CD4-positive, alpha-beta T cell (primary cell): ENCODE measurements at regions of chr1 and their contacts with region 1.

Region 1: GRCh38 chr1:147599362-147600118 is 58.2 kb downstream of the BCL9 start:
- DNase-seq: peak; percentile 95 to 99 (median 97)
- ATAC-seq: peak; percentile 84
- H3K4me3 ChIP-seq: peak overlapping the region; percentile 91
- H3K4me3 Mint-ChIP-seq: peak overlapping the region; percentile 93
- H3K27ac ChIP-seq: peak overlapping the region in 1 of 2 donors; percentile 37
- H3K27ac Mint-ChIP-seq: peak overlapping the region; percentile 86
- H3K4me1 ChIP-seq: peaks cover 17% of the 10 kb centered on the region
- H3K4me1 Mint-ChIP-seq: peaks cover 33% of the 10 kb centered on the region
- H3K27me3 ChIP-seq: no peaks in the 10 kb centered on the region
- H3K27me3 Mint-ChIP-seq: no peaks in the 10 kb centered on the region
- CTCF ChIP-seq: no peak

Region 2: GRCh38 chr1:147647796-147648633 is 48.5 kb after region 1 on chr1:
- CTCF ChIA-PET with region 1: no interaction called
- POLR2A ChIA-PET with region 1: interaction called, 4 read pairs
- intact Hi-C with region 1: loop called in 1 of 2 experiments (anchors 5 kb)
- DNase-seq: peak in 6 of 14 experiments; percentile 11 to 82 (median 52)
- ATAC-seq: peak; percentile 84
- H3K4me3 ChIP-seq: peak overlapping the region; percentile 43
- H3K4me3 Mint-ChIP-seq: peak overlapping the region; percentile 50
- H3K27ac ChIP-seq: peak overlapping the region in 1 of 2 donors; percentile 71
- H3K27ac Mint-ChIP-seq: peak overlapping the region; percentile 45
- H3K4me1 ChIP-seq: peaks cover 40% of the 10 kb centered on the region
- H3K4me1 Mint-ChIP-seq: peaks cover 48% of the 10 kb centered on the region
- H3K27me3 ChIP-seq: no peaks in the 10 kb centered on the region
- H3K27me3 Mint-ChIP-seq: no peaks in the 10 kb centered on the region
- CTCF ChIP-seq: no peak